ENCODE measurements at regions of chr7 and their contacts with region 1.

Region 1: GRCh38 chr7:134632937-134633540 is 13.6 kb upstream of the BPGM start:
- DNase-seq: no peak
- H3K4me3 ChIP-seq: no peak overlapping the region
- H3K27ac ChIP-seq: no peak overlapping the region
- H3K27me3 ChIP-seq: no peaks in the 10 kb centered on the region
- CTCF ChIP-seq: peak; percentile 77

Region 2: GRCh38 chr7:134533288-134533771 is 99.7 kb before region 1 on chr7:
- CTCF ChIA-PET with region 1: no interaction called
- POLR2A ChIA-PET with region 1: no interaction called
- DNase-seq: no peak
- H3K4me3 ChIP-seq: no peak overlapping the region
- H3K27ac ChIP-seq: no peak overlapping the region
- H3K27me3 ChIP-seq: peaks cover 8% of the 10 kb centered on the region
- CTCF ChIP-seq: no peak

Region 3: DNA sequence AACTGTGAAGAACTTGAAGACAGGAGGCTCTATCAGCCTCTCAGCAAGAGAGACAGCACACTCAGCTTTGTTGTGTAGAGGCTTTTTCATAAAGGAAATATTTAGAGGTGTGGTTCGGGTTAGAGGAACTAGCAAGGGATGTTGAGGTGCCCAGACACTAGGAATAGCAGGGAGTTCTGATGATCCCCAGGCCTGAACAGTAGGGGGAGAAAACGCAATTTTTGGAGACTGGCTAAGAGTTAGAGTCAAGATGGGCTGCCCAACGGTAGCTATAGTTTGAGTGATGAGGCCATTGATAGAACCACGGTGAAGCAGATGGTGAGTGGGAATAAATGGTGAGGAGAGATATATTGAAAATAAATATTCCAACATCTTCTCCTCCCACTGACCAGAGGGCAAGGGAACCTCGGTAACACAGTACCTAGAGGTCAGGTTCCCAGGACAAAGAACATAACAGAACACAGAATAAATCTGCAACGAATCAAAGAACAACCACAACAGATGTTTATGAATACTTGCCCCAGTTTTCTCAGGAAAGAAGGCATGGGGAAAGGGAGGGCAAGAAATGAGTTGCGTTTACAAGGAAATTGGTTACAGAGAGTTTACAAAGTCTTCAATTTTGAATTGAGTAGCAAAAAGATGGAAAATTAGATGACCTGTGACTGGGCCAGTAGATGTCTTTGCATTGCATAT is 10.6 kb before region 1 on chr7:
- CTCF ChIA-PET with region 1: interaction called, 14 read pairs
- POLR2A ChIA-PET with region 1: no interaction called
- DNase-seq: no peak
- H3K4me3 ChIP-seq: no peak overlapping the region
- H3K27ac ChIP-seq: no peak overlapping the region
- H3K27me3 ChIP-seq: no peaks in the 10 kb centered on the region
- CTCF ChIP-seq: no peak

Region 4: DNA sequence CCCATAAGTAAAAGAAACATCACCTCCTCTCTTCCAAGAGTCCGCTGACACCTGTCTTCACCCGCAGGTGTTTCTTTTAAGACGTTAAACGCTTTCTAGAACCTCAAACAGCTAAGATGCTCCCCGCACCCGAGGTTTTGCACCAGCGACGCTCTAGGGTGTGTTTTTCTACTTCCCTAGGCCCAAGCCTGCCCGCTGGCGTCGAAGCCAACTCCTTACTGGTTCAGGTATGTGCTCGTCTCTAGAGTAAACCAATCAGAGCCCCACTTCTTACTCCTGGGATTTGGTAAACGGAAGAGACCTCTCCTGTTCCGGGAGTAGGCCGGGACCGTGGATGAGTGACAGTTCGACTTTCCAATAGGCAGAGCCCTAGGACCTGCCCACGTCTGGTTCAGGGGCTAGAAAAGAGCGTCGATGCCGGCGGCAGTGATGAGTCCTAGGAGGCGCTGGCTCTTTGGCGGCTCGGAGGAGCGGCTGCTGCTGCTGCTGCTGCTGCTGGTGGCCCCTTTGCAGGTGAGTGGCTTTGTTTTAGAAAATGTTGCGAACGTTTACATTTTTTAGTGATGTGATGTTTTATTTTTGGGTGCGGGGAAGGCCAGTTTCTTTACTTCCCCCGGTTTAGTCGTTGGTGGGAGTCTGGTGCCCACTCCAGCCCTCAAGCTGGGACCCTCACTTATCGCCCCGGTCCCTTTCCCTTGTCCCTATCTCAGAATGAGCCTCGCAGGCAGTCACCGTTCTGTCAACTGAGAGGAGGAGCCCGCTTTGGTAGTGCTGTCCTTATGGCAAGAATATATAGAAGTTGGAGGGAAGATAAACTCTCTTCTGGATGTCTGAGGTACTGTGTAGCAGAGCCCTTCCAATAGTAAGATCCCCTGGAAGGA is 13.6 kb after region 1 on chr7 and contains the start of gene BPGM:
- CTCF ChIA-PET with region 1: interaction called, 33 read pairs
- POLR2A ChIA-PET with region 1: interaction called, 4 read pairs
- DNase-seq: peak; percentile 100
- H3K4me3 ChIP-seq: peak within 1 kb of the TSS; percentile 75
- H3K27ac ChIP-seq: peak within 1 kb of the TSS; percentile 67
- H3K27me3 ChIP-seq: no peaks in the 10 kb centered on the region
- CTCF ChIP-seq: peak; percentile 27; the same call in 1 of the 2 replicates
- polyA plus RNA-seq, gene BPGM: 31.2 and 43.1 TPM in 2 replicates

Region 5: GRCh38 chr7:134755401-134756022 is 122.5 kb after region 1 on chr7:
- CTCF ChIA-PET with region 1: interaction called, 12 read pairs
- POLR2A ChIA-PET with region 1: no interaction called
- DNase-seq: no peak
- H3K4me3 ChIP-seq: no peak overlapping the region
- H3K27ac ChIP-seq: no peak overlapping the region
- H3K27me3 ChIP-seq: no peaks in the 10 kb centered on the region
- CTCF ChIP-seq: peak; percentile 83

Measured in AG04450 (cell line).